Mammary epithelial cell (primary cell): ENCODE measurements at regions of chr15 and their contacts with region 1.

Region 1: DNA sequence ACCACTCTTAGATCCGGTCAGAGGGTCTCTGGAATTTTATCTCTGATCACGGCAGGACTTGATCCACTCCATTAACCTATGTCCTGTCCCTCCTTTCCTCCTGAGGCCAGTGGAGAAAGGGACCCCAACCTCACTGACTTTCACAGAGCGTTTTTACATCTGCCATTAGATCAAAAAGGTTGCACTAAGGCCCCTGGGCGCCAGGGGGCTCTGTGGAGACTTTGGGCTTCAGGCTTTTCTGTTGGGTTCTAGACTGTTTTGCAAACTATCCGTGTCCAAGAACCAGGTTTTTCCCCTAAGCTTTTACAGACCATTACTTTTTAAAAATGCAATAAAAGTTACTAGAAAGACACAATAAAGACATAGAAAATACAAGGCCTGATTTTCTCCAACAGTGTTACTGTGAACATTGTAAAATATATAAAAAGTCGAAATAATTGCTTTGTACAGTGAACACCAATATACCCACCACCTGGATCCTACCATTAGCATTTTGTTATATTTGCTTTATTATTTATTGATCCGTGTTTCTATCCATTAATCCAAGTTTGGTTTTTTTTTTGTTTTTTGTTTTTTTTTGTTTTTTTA is 159.7 kb downstream of the POLR2M start:
- DNase-seq: peak; percentile 36
- H3K4me3 ChIP-seq: no peak overlapping the region
- H3K27ac ChIP-seq: no peak overlapping the region
- H3K4me1 ChIP-seq: no peaks in the 10 kb centered on the region
- H3K27me3 ChIP-seq: no peaks in the 10 kb centered on the region
- CTCF ChIP-seq: peak; percentile 92 to 93

Region 2: GRCh38 chr15:57743424-57743823 is 122.8 kb before region 1 on chr15:
- CTCF ChIA-PET with region 1: no interaction called
- dilution Hi-C with region 1: loop called (anchors 10 kb)
- in situ Hi-C with region 1: no loop called
- intact Hi-C with region 1: no loop called
- DNase-seq: no peak
- H3K4me3 ChIP-seq: no peak overlapping the region
- H3K27ac ChIP-seq: no peak overlapping the region
- H3K4me1 ChIP-seq: no peaks in the 10 kb centered on the region
- H3K27me3 ChIP-seq: no peaks in the 10 kb centered on the region
- CTCF ChIP-seq: peak; percentile 9 to 33